HAP-1 (cell line): ENCODE measurements at regions of chr3 and their contacts with region 1.

Region 1: GRCh38 chr3:32177702-32178198 is 60.7 kb upstream of the CMTM8 start:
- DNase-seq: peak; percentile 77 to 89
- H3K4me3 ChIP-seq: no peak overlapping the region
- H3K4me1 ChIP-seq: no peaks in the 10 kb centered on the region
- H3K27me3 ChIP-seq: no peaks in the 10 kb centered on the region

Region 2: DNA sequence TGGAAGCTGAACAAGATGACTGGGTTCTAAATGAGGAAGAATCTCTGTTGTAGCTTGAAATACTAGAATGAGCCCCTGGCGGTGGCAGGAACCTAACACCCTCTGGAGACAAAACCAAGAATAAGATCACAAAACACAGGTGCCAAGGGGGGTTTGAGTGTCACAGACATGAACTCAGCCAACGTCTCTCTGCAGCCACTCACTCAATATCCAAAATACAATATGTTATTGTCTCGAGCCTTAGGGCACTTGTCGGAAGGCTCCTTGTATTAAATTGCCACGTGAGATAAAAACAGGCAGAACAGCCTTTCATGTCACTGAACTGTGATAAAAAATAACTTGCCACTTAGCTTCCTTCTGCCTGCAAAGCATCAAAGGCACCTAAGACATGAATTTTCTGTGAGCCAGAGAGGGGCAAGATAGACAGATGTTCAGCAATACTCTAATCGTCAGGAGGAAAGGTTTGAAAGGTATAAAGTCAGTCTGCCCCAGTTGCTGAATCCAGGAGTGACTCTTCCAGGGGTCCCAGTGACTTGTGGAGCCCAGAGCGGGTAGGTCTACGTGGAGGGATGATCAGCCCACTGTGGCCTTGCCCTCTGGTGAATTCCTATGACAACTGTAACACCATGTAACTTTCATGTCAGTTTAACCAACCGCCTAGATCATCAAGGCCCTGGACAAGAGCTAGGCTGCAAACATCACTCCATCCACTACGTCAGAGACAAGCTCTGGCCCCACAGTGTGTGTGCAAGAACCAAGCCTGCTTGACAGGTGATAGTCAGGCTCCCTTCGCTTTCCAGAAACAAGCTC is 361.9 kb before region 1 on chr3:
- in situ Hi-C with region 1: no loop called
- DNase-seq: no peak
- H3K4me3 ChIP-seq: no peak overlapping the region
- H3K4me1 ChIP-seq: no peaks in the 10 kb centered on the region
- H3K27me3 ChIP-seq: no peaks in the 10 kb centered on the region

Region 3: GRCh38 chr3:32238453-32239306 is 60.9 kb after region 1 on chr3 and contains the start of gene CMTM8:
- in situ Hi-C with region 1: loop called (anchors 5 kb)
- DNase-seq: peak; percentile 71 to 83
- H3K4me3 ChIP-seq: peak within 1 kb of the TSS; percentile 61
- H3K4me1 ChIP-seq: peaks cover 11% of the 10 kb centered on the region
- H3K27me3 ChIP-seq: no peaks in the 10 kb centered on the region

Region 4: GRCh38 chr3:32334675-32335074 is 156.9 kb after region 1 on chr3:
- in situ Hi-C with region 1: loop called (anchors 10 kb)
- DNase-seq: peak in 1 of 2 experiments; percentile 32
- H3K4me3 ChIP-seq: no peak overlapping the region
- H3K4me1 ChIP-seq: no peaks in the 10 kb centered on the region
- H3K27me3 ChIP-seq: no peaks in the 10 kb centered on the region

Region 5: GRCh38 chr3:32667122-32667521 is 489.4 kb after region 1 on chr3:
- in situ Hi-C with region 1: loop called (anchors 10 kb)
- DNase-seq: no peak
- H3K4me3 ChIP-seq: no peak overlapping the region
- H3K4me1 ChIP-seq: no peaks in the 10 kb centered on the region
- H3K27me3 ChIP-seq: 0 out of 2 replicates have a peak, but pooled peaks cover 4% of the 10 kb centered on the region